Right cardiac atrium (tissue), 5 donors: ENCODE measurements at regions of chr7 and their contacts with region 1.

Region 1: GRCh38 chr7:20310963-20311742 is 19.5 kb upstream of the ITGB8 start:
- DNase-seq: no peak
- ATAC-seq: no peak
- H3K4me3 ChIP-seq: no peak overlapping the region
- H3K27ac ChIP-seq: no peak overlapping the region
- H3K4me1 ChIP-seq: no peaks in the 10 kb centered on the region
- H3K27me3 ChIP-seq: no peaks in the 10 kb centered on the region

Region 2: DNA sequence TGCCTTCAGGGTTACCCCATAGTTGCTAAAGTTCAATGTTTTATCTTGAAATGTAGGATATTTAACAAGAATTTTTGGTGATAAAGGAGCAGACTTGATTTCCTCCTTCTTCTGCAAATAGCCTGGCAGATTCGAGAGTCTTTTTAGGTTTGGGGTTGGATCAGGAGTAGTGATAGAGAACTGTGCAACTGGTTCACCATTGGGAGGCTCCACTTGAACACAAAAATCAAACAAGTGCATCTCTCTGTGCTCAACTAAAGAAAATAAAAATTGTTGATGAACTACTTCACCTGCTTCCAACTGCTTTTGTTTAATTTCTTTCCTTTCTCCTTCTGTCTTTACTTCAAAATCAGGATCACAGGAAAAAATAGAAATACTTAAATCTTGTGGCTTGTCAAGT is 152.5 kb before region 1 on chr7:
- intact Hi-C with region 1: loop called in 1 of 4 experiments (anchors 10 kb)
- DNase-seq: no peak
- ATAC-seq: peak; percentile 63 to 72
- H3K4me3 ChIP-seq: no peak overlapping the region
- H3K27ac ChIP-seq: no peak overlapping the region
- H3K4me1 ChIP-seq: no peaks in the 10 kb centered on the region
- H3K27me3 ChIP-seq: no peaks in the 10 kb centered on the region